ENCODE measurements at regions of chr7 and their contacts with region 1.

Region 1: DNA sequence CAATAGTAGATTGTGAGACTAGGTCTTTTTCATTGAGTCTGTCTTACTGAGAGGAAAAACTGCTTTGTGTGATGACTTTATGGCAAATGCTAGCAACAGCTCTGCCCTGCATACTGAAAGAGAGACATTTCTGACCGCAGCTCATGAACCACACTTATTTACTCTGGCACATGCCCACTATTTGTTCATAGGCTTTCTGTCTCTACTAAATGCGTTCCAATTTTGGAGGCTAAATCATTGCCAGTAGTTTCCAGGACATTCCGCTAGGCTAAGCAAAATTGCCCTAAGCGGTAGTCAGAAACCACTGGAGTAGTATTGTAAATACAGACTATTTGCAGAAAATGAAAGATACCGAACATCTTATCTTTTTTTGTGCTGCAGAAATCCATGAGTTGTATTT is 55.6 kb upstream of the DLX6 start:
- DNase-seq: peak; percentile 61
- H3K4me3 ChIP-seq: no peak overlapping the region
- H3K27ac ChIP-seq: no peak overlapping the region
- H3K4me1 ChIP-seq: no peaks in the 10 kb centered on the region
- H3K27me3 ChIP-seq: peaks cover 2% of the 10 kb centered on the region
- CTCF ChIP-seq: no peak

Region 2: GRCh38 chr7:96887426-96887825 is 62.3 kb before region 1 on chr7:
- CTCF ChIA-PET with region 1: no interaction called
- dilution Hi-C with region 1: loop called (anchors 5 kb)
- in situ Hi-C with region 1: no loop called
- intact Hi-C with region 1: no loop called
- DNase-seq: peak; percentile 59
- H3K4me3 ChIP-seq: no peak overlapping the region
- H3K27ac ChIP-seq: no peak overlapping the region
- H3K4me1 ChIP-seq: no peaks in the 10 kb centered on the region
- H3K27me3 ChIP-seq: no peaks in the 10 kb centered on the region
- CTCF ChIP-seq: no peak

Region 3: DNA sequence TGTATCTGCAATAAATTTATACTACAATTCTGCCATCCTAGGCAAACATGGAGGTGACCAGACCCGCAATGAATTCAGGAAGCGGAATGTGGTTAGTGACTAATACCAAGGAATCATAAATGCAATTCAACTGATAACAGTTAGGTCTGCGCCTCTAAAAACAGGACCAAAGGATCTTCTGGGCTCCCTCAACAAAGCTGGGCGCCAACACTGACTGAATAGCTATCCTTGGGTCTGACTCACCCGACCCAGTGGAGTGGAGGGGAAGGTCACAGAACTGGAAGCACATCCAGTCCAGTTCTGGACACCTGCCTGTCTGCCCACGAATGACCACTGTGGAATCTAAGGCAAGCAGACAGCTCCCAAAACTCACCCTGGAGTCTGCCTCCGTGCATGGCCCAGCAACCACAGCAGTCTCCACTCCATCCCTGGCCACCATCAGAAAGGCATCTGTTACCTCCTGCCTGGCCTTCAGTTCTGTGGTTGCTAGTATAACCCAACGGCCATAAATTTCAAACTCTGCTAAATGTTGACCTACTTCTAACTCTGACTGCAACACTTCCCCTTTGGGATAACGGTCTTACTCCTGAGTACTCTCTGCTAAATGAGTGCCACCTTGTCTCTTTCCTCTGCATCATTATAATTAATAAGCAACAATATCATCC is 12.6 kb after region 1 on chr7:
- CTCF ChIA-PET with region 1: no interaction called
- dilution Hi-C with region 1: no loop called
- in situ Hi-C with region 1: no loop called
- intact Hi-C with region 1: no loop called
- DNase-seq: no peak
- H3K4me3 ChIP-seq: no peak overlapping the region
- H3K27ac ChIP-seq: no peak overlapping the region
- H3K4me1 ChIP-seq: no peaks in the 10 kb centered on the region
- H3K27me3 ChIP-seq: no peaks in the 10 kb centered on the region
- CTCF ChIP-seq: no peak

Region 4: GRCh38 chr7:97204821-97205220 is 255.1 kb after region 1 on chr7:
- CTCF ChIA-PET with region 1: no interaction called
- dilution Hi-C with region 1: no loop called
- in situ Hi-C with region 1: no loop called
- intact Hi-C with region 1: no loop called
- DNase-seq: no peak
- H3K4me3 ChIP-seq: no peak overlapping the region
- H3K27ac ChIP-seq: no peak overlapping the region
- H3K4me1 ChIP-seq: no peaks in the 10 kb centered on the region
- H3K27me3 ChIP-seq: peaks cover 4% of the 10 kb centered on the region
- CTCF ChIP-seq: no peak